Mucosa of descending colon (tissue), 3 donors: ENCODE measurements at regions of chr2 and their contacts with region 1.

Region 1: DNA sequence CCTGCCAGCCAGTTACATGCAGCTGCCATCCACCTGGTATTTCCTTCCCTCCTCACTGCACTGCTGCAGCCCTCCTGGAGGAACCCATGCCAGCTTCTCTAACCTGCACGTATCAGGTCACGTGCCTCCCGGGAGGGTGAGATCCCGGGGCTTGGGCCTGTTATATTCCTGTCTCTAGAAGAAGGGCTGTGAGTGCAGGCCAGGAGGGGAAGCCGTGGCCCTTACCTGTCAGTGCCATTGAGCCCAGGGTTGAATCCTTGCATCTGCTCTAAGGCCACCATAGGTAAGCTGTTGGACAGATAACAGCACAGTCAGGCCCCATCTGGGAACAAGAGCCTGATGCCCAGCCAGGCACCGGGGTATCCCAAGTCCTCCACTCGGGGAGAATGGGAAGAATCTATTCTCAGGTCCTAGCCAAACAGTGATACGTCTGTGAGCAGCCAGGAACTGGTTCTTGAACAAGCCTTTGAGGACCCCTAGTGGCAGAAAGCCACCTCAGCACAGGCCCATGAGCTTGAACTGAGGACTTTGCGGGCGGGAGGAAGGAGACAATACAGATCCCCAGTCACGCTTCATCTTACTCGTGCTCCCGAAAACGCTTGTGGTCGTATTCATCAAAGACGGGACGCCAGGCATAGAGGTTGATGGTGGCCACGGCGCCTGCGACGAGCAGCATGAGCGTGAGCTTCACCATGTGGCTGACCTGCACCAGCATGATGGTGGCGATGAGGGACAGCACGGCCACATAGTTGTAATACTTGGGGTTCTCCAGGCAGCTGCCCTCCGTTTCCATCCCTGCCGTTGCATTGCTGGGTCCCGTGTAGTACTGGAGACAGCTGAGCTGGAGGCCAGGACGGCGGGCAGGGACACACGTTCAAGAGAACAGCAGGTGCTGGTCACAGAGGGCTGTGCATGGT is 34.4 kb downstream of the CENPO start:
- DNase-seq: peak in 2 of 3 donors; percentile 81 to 91
- ATAC-seq: peak; percentile 91
- H3K4me3 ChIP-seq: no peak overlapping the region
- H3K4me1 ChIP-seq: no peaks in the 10 kb centered on the region
- CTCF ChIP-seq: peak; percentile 73

Region 2: GRCh38 chr2:24409700-24410556 is 417.7 kb before region 1 on chr2:
- intact Hi-C with region 1: loop called in 1 of 2 experiments (anchors 5 kb)
- DNase-seq: peak in 1 of 3 donors; percentile 72
- ATAC-seq: peak; percentile 85
- H3K4me3 ChIP-seq: no peak overlapping the region
- H3K4me1 ChIP-seq: no peaks in the 10 kb centered on the region
- CTCF ChIP-seq: peak; percentile 70

Region 3: DNA sequence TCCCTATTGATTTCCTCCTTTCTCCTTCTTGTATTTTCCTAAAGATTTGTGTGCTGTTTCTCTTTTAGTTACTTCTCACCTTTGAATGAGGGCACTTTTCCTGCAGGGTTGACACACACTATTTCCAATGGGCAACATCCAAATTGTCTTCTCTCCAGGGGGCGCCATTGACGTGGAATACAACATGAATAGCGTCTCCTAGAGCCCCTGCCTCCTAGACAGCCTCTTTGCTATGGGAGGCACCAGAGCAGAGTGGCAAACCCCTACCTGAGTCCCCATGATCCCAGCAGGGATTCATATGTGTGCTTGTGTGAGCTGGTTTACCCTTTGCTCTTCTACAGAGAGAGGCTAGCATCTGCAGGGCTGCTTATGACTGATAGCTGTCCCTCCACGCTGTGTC is 405.9 kb before region 1 on chr2:
- intact Hi-C with region 1: loop called in 1 of 2 experiments (anchors 5 kb)
- DNase-seq: peak in 2 of 3 donors; percentile 43 to 91
- ATAC-seq: peak; percentile 67
- H3K4me3 ChIP-seq: no peak overlapping the region
- H3K4me1 ChIP-seq: no peaks in the 10 kb centered on the region
- CTCF ChIP-seq: no peak

Region 4: GRCh38 chr2:25165992-25166875 is 338.7 kb after region 1 on chr2:
- intact Hi-C with region 1: no loop called
- DNase-seq: peak; percentile 67 to 75 (median 69)
- ATAC-seq: peak; percentile 87
- H3K4me3 ChIP-seq: no peak overlapping the region
- H3K4me1 ChIP-seq: peaks cover 9% of the 10 kb centered on the region
- CTCF ChIP-seq: no peak

Region 5: GRCh38 chr2:25236736-25237135 is 409.2 kb after region 1 on chr2:
- intact Hi-C with region 1: no loop called
- DNase-seq: no peak
- ATAC-seq: no peak
- H3K4me3 ChIP-seq: no peak overlapping the region
- H3K4me1 ChIP-seq: no peaks in the 10 kb centered on the region
- CTCF ChIP-seq: no peak

Region 6: GRCh38 chr2:25596516-25597244 is 769.1 kb after region 1 on chr2:
- intact Hi-C with region 1: no loop called
- DNase-seq: no peak
- ATAC-seq: no peak
- H3K4me3 ChIP-seq: no peak overlapping the region
- H3K4me1 ChIP-seq: no peaks in the 10 kb centered on the region
- CTCF ChIP-seq: no peak